ENCODE measurements at regions of chr17 and their contacts with region 1.

Region 1: DNA sequence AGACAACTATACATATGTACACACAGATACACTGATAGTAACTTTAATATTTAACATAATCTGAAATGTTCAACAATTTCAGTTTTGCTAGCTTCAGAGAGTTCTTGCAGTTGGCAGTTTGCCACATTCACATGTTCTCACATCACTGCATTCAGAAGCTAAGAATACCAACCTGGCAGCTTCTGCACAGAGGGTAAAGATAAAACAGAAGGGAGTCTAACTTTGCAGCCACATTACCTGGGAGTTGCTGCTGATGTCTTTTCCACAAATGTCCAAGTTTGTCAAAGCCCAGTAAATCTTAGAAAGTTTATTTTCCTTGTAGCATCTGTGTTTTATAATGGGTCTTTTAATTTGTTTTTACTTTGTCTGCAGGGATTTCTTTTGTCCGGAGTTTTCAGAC is 332.0 kb downstream of the BCAS3 start:
- DNase-seq: no peak
- ATAC-seq: no peak
- H3K4me3 ChIP-seq: no peak overlapping the region
- H3K27ac ChIP-seq: no peak overlapping the region
- H3K4me1 ChIP-seq: peaks cover 0 to 13% of the 10 kb centered on the region in 2 donors
- H3K27me3 ChIP-seq: no peaks in the 10 kb centered on the region
- CTCF ChIP-seq: no peak
- POLR2A ChIP-seq: no peak

Region 2: DNA sequence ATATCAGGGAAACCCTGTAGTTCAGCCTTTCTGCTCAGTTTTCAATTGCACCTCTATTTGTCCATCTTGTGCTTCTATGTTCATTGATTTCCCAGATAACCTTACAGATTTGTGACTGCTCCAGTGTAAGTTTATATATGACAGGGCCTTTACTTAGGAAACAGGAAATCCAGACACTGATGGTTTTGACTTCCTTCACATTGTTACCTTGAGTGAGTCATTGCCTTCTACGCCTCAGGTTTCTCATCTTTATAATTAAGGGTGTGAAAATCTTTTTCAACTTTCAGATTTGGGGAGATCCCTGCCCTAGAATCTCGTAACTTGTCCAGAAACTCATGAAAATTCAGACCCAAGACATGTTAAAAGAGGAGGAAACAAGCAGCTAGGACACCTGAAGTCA is 47.6 kb after region 1 on chr17:
- in situ Hi-C with region 1: no loop called
- intact Hi-C with region 1: no loop called
- DNase-seq: no peak
- ATAC-seq: no peak
- H3K4me3 ChIP-seq: no peak overlapping the region
- H3K27ac ChIP-seq: no peak overlapping the region
- H3K4me1 ChIP-seq: no peaks in the 10 kb centered on the region
- H3K27me3 ChIP-seq: no peaks in the 10 kb centered on the region
- CTCF ChIP-seq: no peak
- POLR2A ChIP-seq: no peak

Region 3: GRCh38 chr17:61208301-61209105 is 198.8 kb after region 1 on chr17:
- in situ Hi-C with region 1: no loop called
- intact Hi-C with region 1: loop called (anchors 5 kb)
- DNase-seq: no peak
- ATAC-seq: peak; percentile 56 to 67
- H3K4me3 ChIP-seq: peak overlapping the region in 2 of 4 donors; percentile 12 to 14
- H3K27ac ChIP-seq: peak overlapping the region; percentile 9 to 67 (median 44)
- H3K4me1 ChIP-seq: peaks cover 0 to 15% of the 10 kb centered on the region in 2 donors
- H3K27me3 ChIP-seq: no peaks in the 10 kb centered on the region
- CTCF ChIP-seq: no peak
- POLR2A ChIP-seq: no peak

Measured in gastrocnemius medialis (tissue), 4 donors.